AG04450 (cell line): ENCODE measurements at regions of chr4 and their contacts with region 1.

Region 1: DNA sequence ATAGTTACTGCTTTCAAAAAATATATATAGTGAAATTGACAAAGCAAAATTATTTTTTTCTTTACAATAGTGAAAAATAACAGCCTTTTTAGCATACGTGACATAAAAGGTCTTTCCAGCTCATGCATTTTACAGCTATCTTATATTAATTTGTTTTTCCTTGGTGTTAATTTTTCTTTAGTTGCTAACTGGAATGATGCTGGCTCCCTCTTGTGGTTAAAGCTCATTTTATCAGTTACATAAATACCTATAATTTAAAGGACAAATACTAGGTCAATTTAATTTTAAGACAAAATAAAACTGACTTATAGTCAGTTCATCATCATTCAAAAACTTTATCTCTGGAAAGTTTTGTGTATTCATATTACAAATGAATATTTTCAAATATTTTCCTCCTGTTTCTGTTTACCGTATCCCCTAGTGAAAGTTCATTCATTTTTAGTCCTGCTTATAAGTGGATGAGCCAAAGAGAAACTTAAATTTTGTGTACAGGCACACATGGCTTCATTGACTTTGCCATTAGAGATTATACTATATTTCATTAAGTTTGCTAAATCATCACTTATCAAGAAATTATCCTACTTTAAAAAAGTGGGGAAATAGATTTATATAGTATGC is 9.9 kb upstream of the ANAPC4 start:
- DNase-seq: peak; percentile 16
- H3K4me3 ChIP-seq: no peak overlapping the region
- H3K27ac ChIP-seq: no peak overlapping the region
- H3K27me3 ChIP-seq: no peaks in the 10 kb centered on the region
- CTCF ChIP-seq: peak; percentile 72

Region 2: GRCh38 chr4:24980064-24980690 is 386.9 kb before region 1 on chr4:
- CTCF ChIA-PET with region 1: interaction called, 43 read pairs
- POLR2A ChIA-PET with region 1: no interaction called
- DNase-seq: peak; percentile 29
- H3K4me3 ChIP-seq: no peak overlapping the region
- H3K27ac ChIP-seq: no peak overlapping the region
- H3K27me3 ChIP-seq: peaks cover 7% of the 10 kb centered on the region
- CTCF ChIP-seq: peak; percentile 93

Region 3: DNA sequence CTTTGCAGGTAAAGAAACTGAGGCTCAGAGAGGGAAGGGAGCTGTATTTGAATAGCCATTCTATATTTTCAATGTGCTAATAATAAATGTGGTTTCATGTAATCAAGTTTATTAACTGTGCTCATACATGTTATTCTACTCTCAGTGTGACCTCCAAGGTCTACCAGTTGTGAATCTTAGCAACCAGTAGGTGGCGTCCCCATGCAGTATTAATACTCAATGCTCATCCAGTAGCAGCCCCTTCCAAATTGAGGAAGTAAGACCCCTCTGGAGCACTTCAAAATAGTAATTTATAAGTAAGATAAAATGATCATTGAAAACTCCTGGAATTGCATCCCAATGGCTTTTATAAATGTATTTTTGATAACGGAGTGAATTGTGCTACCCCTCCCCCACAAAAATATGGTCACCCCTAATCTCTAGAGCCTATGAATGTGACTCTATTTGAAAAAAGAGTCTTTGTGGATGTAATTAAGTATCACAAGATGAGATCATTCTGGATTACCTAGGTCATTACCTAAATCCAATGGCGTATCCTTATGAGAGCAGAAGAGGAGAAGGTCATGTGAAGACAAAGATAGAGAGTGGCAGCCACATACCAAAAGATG is 186.5 kb before region 1 on chr4:
- CTCF ChIA-PET with region 1: interaction called, 47 read pairs
- POLR2A ChIA-PET with region 1: no interaction called
- DNase-seq: no peak
- H3K4me3 ChIP-seq: no peak overlapping the region
- H3K27ac ChIP-seq: no peak overlapping the region
- H3K27me3 ChIP-seq: no peaks in the 10 kb centered on the region
- CTCF ChIP-seq: peak; percentile 71

Region 4: DNA sequence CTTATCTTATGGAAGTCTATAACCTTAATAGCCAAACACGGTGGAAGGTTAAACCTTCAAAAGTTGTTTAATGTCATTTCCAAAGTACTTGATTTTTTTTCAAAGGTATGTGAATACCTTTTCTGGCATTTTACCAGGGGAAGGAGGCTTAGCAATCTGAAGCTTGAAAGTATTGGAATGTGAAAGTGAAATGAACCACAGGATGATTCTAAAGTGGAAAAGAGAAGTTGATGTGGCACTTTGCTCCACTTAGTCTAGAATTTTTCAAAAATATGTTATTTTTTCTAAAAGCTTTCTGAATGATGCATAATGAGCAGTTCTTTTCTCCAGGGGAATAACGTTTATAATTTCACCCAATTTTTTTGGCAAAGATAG is 114.1 kb before region 1 on chr4:
- CTCF ChIA-PET with region 1: no interaction called
- POLR2A ChIA-PET with region 1: no interaction called
- DNase-seq: no peak
- H3K4me3 ChIP-seq: no peak overlapping the region
- H3K27ac ChIP-seq: no peak overlapping the region
- H3K27me3 ChIP-seq: no peaks in the 10 kb centered on the region
- CTCF ChIP-seq: no peak

Region 5: GRCh38 chr4:25351777-25352416 is 15.2 kb before region 1 on chr4:
- CTCF ChIA-PET with region 1: interaction called, 41 read pairs
- POLR2A ChIA-PET with region 1: no interaction called
- DNase-seq: peak; percentile 24
- H3K4me3 ChIP-seq: no peak overlapping the region
- H3K27ac ChIP-seq: no peak overlapping the region
- H3K27me3 ChIP-seq: no peaks in the 10 kb centered on the region
- CTCF ChIP-seq: no peak

Region 6: GRCh38 chr4:25383647-25384046 is 16.5 kb after region 1 on chr4:
- CTCF ChIA-PET with region 1: interaction called, 15 read pairs
- POLR2A ChIA-PET with region 1: no interaction called
- DNase-seq: no peak
- H3K4me3 ChIP-seq: no peak overlapping the region
- H3K27ac ChIP-seq: no peak overlapping the region
- H3K27me3 ChIP-seq: no peaks in the 10 kb centered on the region
- CTCF ChIP-seq: no peak